H1 (cell line): ENCODE measurements at regions of chr11 and their contacts with region 1.

Region 1: DNA sequence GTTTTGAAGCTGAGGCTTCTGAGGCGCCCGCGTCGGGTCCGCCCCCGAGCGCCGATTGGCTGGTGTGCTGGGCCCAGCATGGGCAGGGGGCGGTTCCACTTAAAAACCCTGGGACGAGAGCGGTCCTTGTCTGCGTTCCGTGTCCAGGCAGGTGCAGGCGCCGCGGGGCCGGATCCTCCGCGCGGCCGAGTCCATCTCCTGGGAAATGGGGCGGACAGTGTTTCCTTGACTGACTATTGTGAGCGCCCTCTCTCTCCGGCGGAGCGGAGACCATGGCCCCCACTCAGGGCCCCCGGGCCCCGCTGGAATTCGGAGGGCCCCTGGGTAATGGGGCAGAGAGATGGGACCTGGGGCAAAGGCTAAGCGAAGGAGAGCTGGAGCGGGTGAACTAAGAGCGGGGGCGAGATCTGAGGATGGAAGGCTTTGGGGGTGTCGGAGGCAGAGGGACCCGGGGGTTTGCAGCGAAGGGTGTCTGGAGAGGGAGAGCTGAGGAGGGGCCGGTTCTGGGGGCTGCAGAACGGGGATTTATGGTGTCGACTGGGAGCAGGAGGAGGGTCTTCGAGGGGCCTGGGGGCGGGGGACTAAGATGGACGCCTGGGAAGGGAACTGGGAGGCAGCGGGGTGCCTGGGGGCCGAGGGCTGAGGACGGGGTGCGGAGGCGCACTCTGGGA is at the start of gene TM7SF2:
- DNase-seq: peak; percentile 85 to 95
- H3K4me3 ChIP-seq: peak within 1 kb of the TSS; percentile 76 to 90 (median 85)
- H3K27ac ChIP-seq: peak within 1 kb of the TSS; percentile 42; the same call in 1 of the 2 replicates
- H3K4me1 ChIP-seq: peaks cover 2 to 26% (median 19%) of the 10 kb centered on the region in 4 experiments
- H3K27me3 ChIP-seq: no peaks in the 10 kb centered on the region
- CTCF ChIP-seq: no peak
- EP300 ChIP-seq: no peak
- POLR2A ChIP-seq: peak in 1 of 2 experiments; percentile 91; a peak in 2 of 3 replicates
- RAD21 ChIP-seq: no peak
- total RNA-seq, gene TM7SF2: 40.1 and 42.4 TPM in 2 replicates

Region 2: DNA sequence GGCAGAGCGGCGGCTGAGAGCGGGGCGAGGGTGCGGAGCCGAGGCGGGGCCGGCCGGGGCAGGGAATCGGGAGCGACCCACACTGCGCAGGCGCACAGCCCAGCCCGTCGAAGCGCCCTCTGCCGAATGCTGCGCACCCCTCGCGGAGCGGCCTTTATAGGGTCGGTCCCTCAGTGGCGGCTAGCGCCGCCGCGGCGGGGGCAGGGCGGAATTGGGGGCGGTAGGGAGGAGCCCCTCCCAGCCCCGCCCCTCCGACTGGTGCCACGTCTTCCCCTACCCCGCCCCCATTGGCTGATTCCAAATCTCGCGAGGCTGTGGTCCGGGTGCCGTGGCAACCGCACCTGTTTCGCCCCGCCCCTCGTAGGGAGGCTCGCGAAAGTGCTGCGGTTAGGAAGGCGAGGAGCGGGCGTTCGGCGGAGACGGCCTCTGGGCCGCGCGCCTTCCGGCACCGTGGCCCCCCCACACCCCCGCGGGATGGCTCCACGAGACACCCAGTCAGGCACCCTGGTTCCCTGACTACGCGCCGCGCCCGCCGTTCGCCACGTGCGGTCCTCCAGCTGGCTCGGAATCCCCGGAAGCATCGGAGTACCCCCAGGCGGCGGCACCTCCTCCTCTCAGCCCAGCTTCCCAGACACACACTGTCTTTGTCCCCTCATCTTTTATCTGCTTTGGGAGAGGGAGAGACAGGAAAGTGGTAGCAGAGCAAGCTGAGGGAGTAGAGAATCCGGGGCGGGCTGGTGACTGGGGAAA is 233.2 kb before region 1 on chr11 and contains the start of gene EHD1:
- CTCF ChIA-PET with region 1: no interaction called
- POLR2A ChIA-PET with region 1: no interaction called
- DNase-seq: peak; percentile 94 to 99
- H3K4me3 ChIP-seq: peak within 1 kb of the TSS; percentile 60 to 97 (median 94)
- H3K27ac ChIP-seq: peak within 1 kb of the TSS; percentile 71
- H3K4me1 ChIP-seq: peaks cover 0 to 22% (median 11%) of the 10 kb centered on the region in 4 experiments; a peak in 6 of 7 replicates
- H3K27me3 ChIP-seq: peaks cover 0 to 6% (median 2%) of the 10 kb centered on the region in 4 experiments; a peak in 3 of 7 replicates
- CTCF ChIP-seq: peak; percentile 66 to 76 (median 71)
- EP300 ChIP-seq: no peak
- POLR2A ChIP-seq: peak in 1 of 2 experiments; percentile 92; a peak in 2 of 3 replicates
- RAD21 ChIP-seq: 0 out of 4 replicates have a peak, but pooled peaks of 1 of the 2 experiments have one; percentile 24
- total RNA-seq, gene EHD1: 36.9 and 42.9 TPM in 2 replicates

Region 3: DNA sequence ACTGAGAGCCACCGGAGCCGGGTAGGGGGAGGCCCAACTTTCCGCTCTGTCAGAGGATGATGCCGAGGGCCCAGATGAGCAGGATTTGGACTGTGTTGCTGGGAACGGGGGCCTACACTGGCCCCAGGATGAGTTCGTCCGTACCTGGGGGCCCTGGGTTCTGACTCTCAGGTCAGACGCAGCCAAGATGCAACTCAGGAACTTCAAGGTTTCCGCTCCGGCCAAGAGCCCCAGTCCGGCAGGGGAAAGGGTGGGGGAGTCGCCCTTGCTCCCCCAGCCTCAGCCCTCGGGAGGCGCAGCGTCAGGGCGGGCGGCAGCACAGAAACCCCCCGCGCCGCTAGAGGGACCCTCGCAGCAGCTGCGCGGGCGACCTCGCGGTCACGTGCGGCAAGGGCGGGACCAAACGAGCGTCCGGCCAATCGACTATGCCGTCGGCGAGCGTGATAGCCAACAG is 98.2 kb before region 1 on chr11:
- CTCF ChIA-PET with region 1: interaction called, 10 read pairs
- POLR2A ChIA-PET with region 1: interaction called, 13 read pairs
- DNase-seq: peak in 1 of 2 experiments; percentile 78
- H3K4me3 ChIP-seq: peak overlapping the region; percentile 66 to 92 (median 86)
- H3K27ac ChIP-seq: peak overlapping the region; percentile 88
- H3K4me1 ChIP-seq: peaks cover 0 to 7% (median under 1%) of the 10 kb centered on the region in 4 experiments; a peak in 4 of 7 replicates
- H3K27me3 ChIP-seq: no peaks in the 10 kb centered on the region
- CTCF ChIP-seq: peak; percentile 53 to 73 (median 72); a peak in 3 of 4 replicates
- EP300 ChIP-seq: no peak
- POLR2A ChIP-seq: no peak
- RAD21 ChIP-seq: no peak

Region 4: GRCh38 chr11:65040847-65041621 is 70.8 kb before region 1 on chr11 and contains the start of gene SAC3D1:
- CTCF ChIA-PET with region 1: interaction called, 4 read pairs
- POLR2A ChIA-PET with region 1: interaction called, 10 read pairs
- DNase-seq: peak; percentile 80 to 94
- H3K4me3 ChIP-seq: peak within 1 kb of the TSS; percentile 48 to 93 (median 80)
- H3K27ac ChIP-seq: peak within 1 kb of the TSS; percentile 85; the same call in 1 of the 2 replicates
- H3K4me1 ChIP-seq: no peaks in the 10 kb centered on the region; a peak in 2 of 7 replicates
- H3K27me3 ChIP-seq: no peaks in the 10 kb centered on the region
- CTCF ChIP-seq: no peak
- EP300 ChIP-seq: no peak
- POLR2A ChIP-seq: peak; percentile 58 to 60
- RAD21 ChIP-seq: no peak
- total RNA-seq, gene SAC3D1: 19.4 and 23.3 TPM in 2 replicates

Region 5: GRCh38 chr11:65083834-65084597 is 27.9 kb before region 1 on chr11 and contains the starts of genes CDCA5 and ZFPL1:
- CTCF ChIA-PET with region 1: interaction called, 7 read pairs
- POLR2A ChIA-PET with region 1: interaction called, 186 read pairs
- DNase-seq: peak; percentile 70 to 98
- H3K4me3 ChIP-seq: peak within 1 kb of the TSS; percentile 92 to 99 (median 98)
- H3K27ac ChIP-seq: peak within 1 kb of the TSS; percentile 94
- H3K4me1 ChIP-seq: peaks cover 0 to 9% (median 4%) of the 10 kb centered on the region in 4 experiments; a peak in 5 of 7 replicates
- H3K27me3 ChIP-seq: no peaks in the 10 kb centered on the region
- CTCF ChIP-seq: no peak; a peak in 1 of 4 replicates
- EP300 ChIP-seq: peak in 1 of 2 experiments; percentile 36; a peak in 1 of 3 replicates
- POLR2A ChIP-seq: peak; percentile 54 to 85
- RAD21 ChIP-seq: 0 out of 4 replicates have a peak, but pooled peaks of 1 of the 2 experiments have one; percentile 0
- total RNA-seq, gene CDCA5: 87.0 and 90.0 TPM in 2 replicates
- total RNA-seq, gene ZFPL1: 21.4 and 21.5 TPM in 2 replicates

Region 6: GRCh38 chr11:65134386-65135253 is 22.7 kb after region 1 on chr11 and contains the start of gene SYVN1:
- CTCF ChIA-PET with region 1: interaction called, 71 read pairs
- POLR2A ChIA-PET with region 1: interaction called, 305 read pairs
- DNase-seq: peak; percentile 75 to 94
- H3K4me3 ChIP-seq: peak within 1 kb of the TSS; percentile 84 to 94 (median 88)
- H3K27ac ChIP-seq: peak within 1 kb of the TSS; percentile 99
- H3K4me1 ChIP-seq: peaks cover 0 to 13% (median 7%) of the 10 kb centered on the region in 4 experiments; a peak in 6 of 7 replicates
- H3K27me3 ChIP-seq: no peaks in the 10 kb centered on the region
- CTCF ChIP-seq: no peak
- EP300 ChIP-seq: peak in 1 of 2 experiments; percentile 97; a peak in 2 of 3 replicates
- POLR2A ChIP-seq: peak in 1 of 2 experiments; percentile 96; a peak in 1 of 3 replicates
- RAD21 ChIP-seq: no peak
- total RNA-seq, gene SYVN1: 29.4 and 34.0 TPM in 2 replicates

Region 7: DNA sequence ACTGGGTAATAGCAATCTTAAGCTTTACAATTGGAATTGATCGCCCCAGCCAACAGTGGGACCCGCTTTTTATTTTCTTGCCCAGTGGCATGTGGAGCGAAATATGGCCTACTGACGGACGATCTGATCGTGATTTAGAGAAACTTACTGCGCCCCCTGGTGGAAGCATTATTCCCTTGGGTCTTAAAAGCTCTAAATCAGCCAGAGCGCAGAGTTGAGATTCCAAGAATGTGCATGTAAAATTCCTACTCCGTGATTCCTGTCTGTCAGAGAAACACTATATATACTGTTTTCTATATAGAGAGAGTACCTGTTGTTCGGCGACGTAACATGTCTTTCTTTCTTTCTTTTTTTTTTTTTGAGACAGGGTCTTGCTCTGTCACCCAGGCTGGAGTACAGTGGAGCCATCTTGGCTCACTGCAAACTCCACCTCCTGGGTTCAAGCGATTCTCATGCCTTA is 218.1 kb after region 1 on chr11:
- CTCF ChIA-PET with region 1: interaction called, 10 read pairs
- POLR2A ChIA-PET with region 1: no interaction called
- DNase-seq: peak in 1 of 2 experiments; percentile 91
- H3K4me3 ChIP-seq: no peak overlapping the region
- H3K27ac ChIP-seq: no peak overlapping the region
- H3K4me1 ChIP-seq: peaks cover 0 to 4% (median 2%) of the 10 kb centered on the region in 4 experiments; a peak in 3 of 7 replicates
- H3K27me3 ChIP-seq: no peaks in the 10 kb centered on the region; a peak in 1 of 7 replicates
- CTCF ChIP-seq: peak; percentile 29 to 79 (median 77)
- EP300 ChIP-seq: no peak
- POLR2A ChIP-seq: no peak
- RAD21 ChIP-seq: peak; percentile 49 to 60